Astrocyte of the cerebellum (primary cell): ENCODE measurements at regions of chr16 and their contacts with region 1.

Region 1: GRCh38 chr16:67260426-67261075 is 11.8 kb downstream of the SLC9A5 start:
- DNase-seq: peak; percentile 47
- H3K4me3 ChIP-seq: no peak overlapping the region
- CTCF ChIP-seq: peak; percentile 81

Region 2: GRCh38 chr16:67339453-67339852 is 78.9 kb after region 1 on chr16:
- in situ Hi-C with region 1: loop called (anchors 5 kb)
- DNase-seq: peak; percentile 24
- H3K4me3 ChIP-seq: no peak overlapping the region
- CTCF ChIP-seq: peak; percentile 43

Region 3: DNA sequence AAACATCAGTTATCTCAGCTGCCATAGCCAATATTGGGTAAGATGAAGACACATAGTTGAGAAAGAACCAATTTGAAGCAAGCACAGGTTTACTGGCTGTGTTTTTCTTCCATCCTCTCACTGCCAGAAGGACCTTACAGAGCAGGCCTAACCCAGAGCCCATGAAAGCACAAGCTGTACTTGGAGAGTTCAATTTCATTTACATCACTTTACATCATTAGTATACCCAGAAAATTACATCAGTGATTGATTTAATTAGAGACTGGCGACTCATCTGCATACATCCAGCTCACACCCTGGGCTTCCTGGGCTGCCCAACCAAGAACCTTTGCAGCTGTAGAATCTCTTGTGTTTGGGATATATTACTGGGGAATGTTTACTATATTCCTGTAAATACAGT is 89.8 kb after region 1 on chr16:
- in situ Hi-C with region 1: no loop called
- DNase-seq: no peak
- H3K4me3 ChIP-seq: no peak overlapping the region
- CTCF ChIP-seq: no peak

Region 4: DNA sequence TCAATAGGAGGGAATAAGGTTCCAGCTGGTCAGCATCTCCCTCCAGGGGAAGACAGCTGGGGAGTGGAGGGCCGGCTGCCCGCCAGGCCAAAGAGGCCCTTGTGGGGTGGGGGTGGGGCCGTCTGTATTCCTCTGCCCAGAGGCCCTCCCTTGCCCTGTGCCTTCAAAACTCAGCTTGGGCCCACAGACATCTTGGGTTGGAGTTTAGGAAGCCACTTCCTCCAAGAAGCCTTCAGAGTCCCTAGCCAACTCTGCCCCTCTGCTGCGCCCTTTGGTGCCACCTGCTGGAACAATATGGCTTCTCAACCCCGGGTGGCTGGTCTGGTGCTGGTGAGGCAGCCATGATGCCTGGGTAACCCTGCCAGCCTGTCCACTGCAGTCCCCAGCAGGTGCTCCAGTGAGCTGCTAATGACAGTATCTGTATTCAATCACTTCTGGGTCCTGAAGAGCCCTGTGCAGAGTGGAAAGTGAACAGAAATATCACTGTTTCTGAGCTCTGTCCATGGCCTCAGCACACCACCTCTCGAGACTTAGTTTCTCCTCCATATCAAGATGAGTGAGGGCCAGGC is 187.0 kb after region 1 on chr16:
- in situ Hi-C with region 1: loop called (anchors 10 kb)
- DNase-seq: no peak
- H3K4me3 ChIP-seq: no peak overlapping the region
- CTCF ChIP-seq: peak; percentile 45